ENCODE measurements at regions of chr17 and their contacts with region 1.

Region 1: DNA sequence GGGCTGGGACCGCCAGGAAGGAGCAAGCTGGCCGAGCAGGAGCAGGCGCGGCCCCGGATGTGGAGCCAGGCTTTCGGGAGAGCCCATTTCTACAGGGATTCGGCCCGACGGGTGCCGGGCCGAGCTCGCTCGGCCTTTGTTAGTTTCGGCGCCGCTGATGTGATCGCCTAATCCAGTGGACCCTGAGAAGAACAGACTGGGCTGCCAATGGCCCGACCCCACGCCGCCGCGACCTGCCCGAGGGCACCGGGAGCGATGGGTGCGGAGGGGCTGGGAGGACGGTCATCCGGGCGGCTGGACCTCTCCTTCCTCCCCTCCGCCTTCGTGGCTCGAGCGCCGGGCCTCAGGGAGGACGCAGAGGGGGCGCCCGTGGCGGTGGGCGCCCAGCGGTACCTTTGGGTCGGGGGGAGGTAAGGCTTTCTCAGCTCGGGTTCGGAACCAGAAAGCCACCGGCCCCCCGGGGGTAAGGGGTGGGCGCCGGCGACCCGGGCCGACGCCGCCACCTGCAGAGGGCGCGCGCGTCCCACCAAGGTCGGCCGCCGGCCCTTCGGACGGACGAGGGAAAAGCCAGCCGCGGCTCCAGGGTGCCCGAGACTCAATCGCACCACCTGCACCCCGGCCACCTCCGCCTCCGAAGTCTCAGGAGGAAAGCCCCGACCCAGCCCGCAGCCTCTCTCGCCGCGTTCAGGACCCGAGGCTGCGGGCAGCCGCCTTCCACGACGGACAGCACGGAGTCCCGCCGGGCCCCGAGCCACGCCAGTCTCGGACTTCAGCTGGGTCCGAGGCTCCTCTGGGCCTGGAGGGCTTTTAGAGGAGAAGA is 7.1 kb downstream of the CBX8 start:
- DNase-seq: peak; percentile 58 to 95
- ATAC-seq: peak; percentile 19 to 65; a peak in 3 of 6 replicates
- H3K4me3 ChIP-seq: no peak overlapping the region
- H3K27ac ChIP-seq: peak overlapping the region; percentile 63 to 73; a peak in 5 of 6 replicates
- H3K4me1 ChIP-seq: peaks cover 22% of the 10 kb centered on the region
- CTCF ChIP-seq: peak; percentile 98
- EP300 ChIP-seq: no peak
- POLR2A ChIP-seq: no peak
- RAD21 ChIP-seq: peak; percentile 85 to 96

Region 2: DNA sequence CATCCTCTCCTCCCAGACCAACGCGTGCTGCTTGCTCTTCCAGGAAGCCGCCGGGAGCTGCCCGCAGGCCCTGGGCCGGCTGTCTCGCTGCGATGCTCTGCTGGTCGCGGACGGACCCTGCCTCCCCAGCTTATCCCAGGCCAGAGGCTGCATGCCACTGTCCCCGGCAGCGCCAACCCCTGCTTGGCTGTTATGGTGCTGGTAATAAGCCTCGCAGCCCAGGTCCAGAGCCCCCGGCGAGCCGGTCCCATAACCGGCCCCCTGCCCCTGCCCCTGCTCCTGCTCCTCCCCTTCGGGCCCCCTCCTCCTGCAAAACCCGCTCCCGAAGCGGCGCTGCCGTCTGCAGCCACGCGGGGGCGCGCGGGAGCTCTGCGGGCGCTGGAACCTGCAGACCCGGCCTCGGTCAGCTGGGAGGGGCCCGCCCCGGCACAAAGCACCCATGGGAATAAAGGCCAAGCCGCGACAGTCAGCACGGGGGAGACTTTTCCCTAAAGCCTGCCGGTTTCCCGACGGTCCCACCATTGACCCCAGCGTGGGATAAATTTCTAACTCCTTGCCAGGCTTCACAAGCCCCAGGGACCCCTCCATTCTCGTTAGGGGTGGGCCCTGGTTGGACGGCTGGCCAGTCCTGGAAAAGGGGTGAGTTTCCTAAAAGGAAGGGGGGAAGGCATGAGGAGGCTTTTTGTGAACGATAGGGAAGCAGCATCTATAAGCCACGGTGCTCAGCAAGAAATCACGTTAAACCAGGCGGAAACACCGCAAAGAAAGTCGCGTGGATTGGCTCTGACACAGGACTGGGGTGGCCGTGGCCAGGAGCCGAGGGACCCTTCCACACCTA is 47.8 kb before region 1 on chr17:
- CTCF ChIA-PET with region 1: interaction called, 25 read pairs
- POLR2A ChIA-PET with region 1: no interaction called
- DNase-seq: peak; percentile 69 to 93
- ATAC-seq: peak; percentile 68 to 85
- H3K4me3 ChIP-seq: peak overlapping the region; percentile 36; the same call in 2 of the 3 replicates
- H3K27ac ChIP-seq: peak overlapping the region; percentile 51 to 74; a peak in 5 of 6 replicates
- H3K4me1 ChIP-seq: peaks cover 18% of the 10 kb centered on the region; the same call in 2 of the 3 replicates
- CTCF ChIP-seq: peak; percentile 97
- EP300 ChIP-seq: no peak
- POLR2A ChIP-seq: no peak
- RAD21 ChIP-seq: peak; percentile 72 to 85

Region 3: GRCh38 chr17:79777894-79778503 is 11.7 kb before region 1 on chr17 and contains the start of gene CBX2:
- CTCF ChIA-PET with region 1: interaction called, 45 read pairs
- POLR2A ChIA-PET with region 1: interaction called, 4 read pairs
- DNase-seq: peak; percentile 75 to 92
- ATAC-seq: peak; percentile 64 to 72
- H3K4me3 ChIP-seq: peak within 1 kb of the TSS; percentile 93
- H3K27ac ChIP-seq: peak within 1 kb of the TSS; percentile 91 to 98
- H3K4me1 ChIP-seq: peaks cover 21% of the 10 kb centered on the region
- CTCF ChIP-seq: no peak
- EP300 ChIP-seq: no peak
- POLR2A ChIP-seq: peak; percentile 93
- RAD21 ChIP-seq: no peak
- polyA plus RNA-seq, gene CBX2: 7.4 and 8.2 TPM in 2 replicates

Region 4: DNA sequence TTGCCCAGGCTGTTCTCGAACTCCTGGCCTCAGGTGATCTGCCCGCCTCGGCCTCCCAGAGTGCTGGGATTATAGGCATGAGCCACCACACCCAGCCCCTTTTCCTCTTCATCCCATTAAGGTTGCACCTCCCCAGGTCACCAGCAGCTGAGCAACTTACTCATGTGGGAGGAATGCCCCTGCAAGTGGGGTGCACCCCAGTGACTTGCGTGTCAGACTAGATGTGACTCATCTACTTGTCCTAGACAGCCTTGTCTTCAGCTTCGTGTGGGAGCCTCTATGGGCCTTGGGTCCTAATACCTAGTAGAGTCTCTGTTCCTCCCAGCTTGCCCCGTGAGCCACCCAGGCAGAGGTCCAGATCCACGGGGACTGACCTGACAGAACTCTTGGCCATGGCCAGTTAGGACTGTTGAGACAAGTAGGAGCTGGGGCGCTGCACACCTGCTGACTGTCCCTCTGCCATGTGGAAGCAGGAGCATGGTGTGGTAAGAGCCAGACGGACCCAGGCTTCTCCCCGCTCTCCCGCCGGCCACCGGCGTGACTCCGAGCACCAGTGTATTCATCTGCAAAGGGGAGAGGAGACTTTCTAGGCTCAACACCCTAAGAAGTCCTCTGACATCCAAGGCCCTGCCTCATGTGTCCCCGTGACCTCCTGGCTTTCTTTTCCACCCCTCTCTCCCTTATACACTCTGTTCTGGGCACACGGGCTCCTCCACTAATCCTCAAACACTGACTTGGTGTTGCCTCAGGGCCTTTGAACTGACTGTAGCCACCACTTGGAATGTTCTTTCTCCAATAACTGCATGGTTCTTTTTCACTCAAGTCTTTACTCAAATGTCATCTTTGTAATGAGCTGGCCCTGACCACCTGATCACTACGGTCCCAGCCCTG is 61.1 kb after region 1 on chr17:
- CTCF ChIA-PET with region 1: interaction called, 12 read pairs
- POLR2A ChIA-PET with region 1: no interaction called
- DNase-seq: peak; percentile 90 to 99
- ATAC-seq: peak; percentile 78 to 87
- H3K4me3 ChIP-seq: no peak overlapping the region
- H3K27ac ChIP-seq: peak overlapping the region; percentile 71 to 83
- H3K4me1 ChIP-seq: peaks cover 36% of the 10 kb centered on the region
- CTCF ChIP-seq: no peak
- EP300 ChIP-seq: no peak; a peak in 1 of 5 replicates
- POLR2A ChIP-seq: no peak
- RAD21 ChIP-seq: peak; percentile 13 to 17; a peak in 1 of 5 replicates

Region 5: GRCh38 chr17:79923974-79924638 is 134.4 kb after region 1 on chr17:
- CTCF ChIA-PET with region 1: interaction called, 12 read pairs
- POLR2A ChIA-PET with region 1: no interaction called
- DNase-seq: peak in 1 of 2 experiments; percentile 77
- ATAC-seq: peak; percentile 38 to 83; a peak in 4 of 6 replicates
- H3K4me3 ChIP-seq: no peak overlapping the region
- H3K27ac ChIP-seq: peak overlapping the region; percentile 25 to 77; a peak in 5 of 6 replicates
- H3K4me1 ChIP-seq: peaks cover 28% of the 10 kb centered on the region
- CTCF ChIP-seq: peak; percentile 46; the same call in 2 of the 3 replicates
- EP300 ChIP-seq: no peak
- POLR2A ChIP-seq: no peak
- RAD21 ChIP-seq: peak; percentile 30 to 53; a peak in 2 of 5 replicates

Measured in A549 (cell line).